WTC11 (cell line): ENCODE measurements at regions of chr19 and their contacts with region 1.

Region 1: DNA sequence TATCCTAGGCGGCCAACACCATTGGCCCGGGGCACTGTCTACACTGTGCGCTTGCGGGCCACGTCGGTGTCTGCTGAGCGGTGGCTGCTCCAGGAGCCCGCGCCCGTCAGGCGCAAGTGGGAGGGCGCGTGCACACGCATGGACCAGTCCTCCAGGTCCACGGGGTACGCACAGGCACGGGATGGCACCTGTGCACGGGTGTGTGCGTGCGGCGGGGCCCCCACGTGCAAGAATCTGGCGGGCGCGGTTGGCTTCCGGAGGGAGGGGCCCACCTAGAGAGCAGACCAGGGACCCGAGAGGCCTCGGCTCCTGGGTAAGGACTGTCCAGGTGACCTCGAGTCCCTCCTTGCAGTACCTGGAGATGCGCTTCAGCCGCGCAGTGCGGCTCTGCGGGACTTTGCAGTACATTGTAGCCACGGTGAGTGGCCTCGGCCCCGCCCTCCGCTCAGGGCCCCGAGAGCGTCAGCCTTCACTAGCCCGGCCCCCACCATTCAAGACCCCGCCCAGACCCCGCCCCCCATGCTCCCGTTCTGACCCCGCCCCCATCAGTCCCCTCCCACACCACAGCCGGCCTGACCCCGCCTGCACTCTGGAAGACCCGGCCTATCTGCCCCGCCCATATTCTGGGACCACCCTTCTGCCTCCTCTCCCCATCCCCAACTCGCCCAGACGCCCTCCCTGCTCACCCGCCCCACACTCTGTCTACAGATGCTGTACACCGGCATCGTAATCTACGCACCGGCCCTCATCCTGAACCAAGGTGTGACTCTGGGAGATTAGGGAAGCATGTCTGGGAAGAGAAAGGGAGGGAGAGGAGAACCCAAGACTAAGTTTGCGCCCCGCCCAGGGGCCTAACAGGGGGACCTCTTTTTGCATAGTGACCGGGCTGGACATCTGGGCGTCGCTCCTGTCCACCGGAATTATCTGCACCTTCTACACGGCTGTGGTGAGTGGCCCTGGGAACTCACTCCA is 2.3 kb downstream of the SLC5A5 start:
- DNase-seq: peak; percentile 88
- ATAC-seq: peak; percentile 76
- H3K4me3 Mint-ChIP-seq: peak overlapping the region; percentile 68
- H3K27ac Mint-ChIP-seq: no peak overlapping the region
- H3K4me1 Mint-ChIP-seq: peaks cover 12% of the 10 kb centered on the region
- H3K27me3 Mint-ChIP-seq: peaks cover 13% of the 10 kb centered on the region
- CTCF ChIP-seq: no peak

Region 2: GRCh38 chr19:17737690-17738153 is 136.3 kb before region 1 on chr19:
- CTCF ChIA-PET with region 1: no interaction called
- POLR2A ChIA-PET with region 1: no interaction called
- DNase-seq: no peak
- ATAC-seq: no peak
- H3K4me3 Mint-ChIP-seq: no peak overlapping the region
- H3K27ac Mint-ChIP-seq: peak overlapping the region; percentile 49
- H3K4me1 Mint-ChIP-seq: peaks cover 5% of the 10 kb centered on the region; the same call in 1 of the 2 replicates
- H3K27me3 Mint-ChIP-seq: peaks cover 4% of the 10 kb centered on the region; the same call in 1 of the 2 replicates
- CTCF ChIP-seq: no peak

Region 3: DNA sequence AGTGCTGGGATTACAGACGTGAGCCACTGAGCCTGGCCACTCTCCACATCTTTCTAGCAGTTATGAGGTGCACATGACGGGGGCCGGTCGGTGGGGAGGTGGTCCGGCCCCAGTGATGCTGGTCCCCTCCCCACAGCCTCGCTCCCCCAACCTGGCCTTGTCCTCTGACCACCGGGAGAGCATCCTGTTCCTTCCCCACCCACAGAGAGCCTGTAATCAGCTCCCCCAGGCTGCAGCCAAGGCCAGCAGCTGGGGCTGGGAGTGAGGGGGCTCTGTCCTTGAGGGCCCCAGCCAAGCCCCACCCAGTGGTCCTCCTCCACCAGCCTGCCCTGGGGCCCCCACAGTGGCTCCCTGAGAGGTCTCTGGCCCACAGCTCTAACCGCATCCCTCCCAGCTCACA is 49.7 kb before region 1 on chr19:
- CTCF ChIA-PET with region 1: no interaction called
- POLR2A ChIA-PET with region 1: no interaction called
- DNase-seq: no peak
- ATAC-seq: no peak
- H3K4me3 Mint-ChIP-seq: no peak overlapping the region
- H3K27ac Mint-ChIP-seq: no peak overlapping the region
- H3K4me1 Mint-ChIP-seq: peaks cover 8% of the 10 kb centered on the region; the same call in 1 of the 2 replicates
- H3K27me3 Mint-ChIP-seq: no peaks in the 10 kb centered on the region; the same call in 1 of the 2 replicates
- CTCF ChIP-seq: no peak

Region 4: GRCh38 chr19:17915951-17916593 is 42.0 kb after region 1 on chr19:
- CTCF ChIA-PET with region 1: no interaction called
- POLR2A ChIA-PET with region 1: no interaction called
- DNase-seq: no peak
- ATAC-seq: no peak
- H3K4me3 Mint-ChIP-seq: no peak overlapping the region
- H3K27ac Mint-ChIP-seq: no peak overlapping the region
- H3K4me1 Mint-ChIP-seq: no peaks in the 10 kb centered on the region
- H3K27me3 Mint-ChIP-seq: peaks cover 20% of the 10 kb centered on the region
- CTCF ChIP-seq: no peak

Region 5: DNA sequence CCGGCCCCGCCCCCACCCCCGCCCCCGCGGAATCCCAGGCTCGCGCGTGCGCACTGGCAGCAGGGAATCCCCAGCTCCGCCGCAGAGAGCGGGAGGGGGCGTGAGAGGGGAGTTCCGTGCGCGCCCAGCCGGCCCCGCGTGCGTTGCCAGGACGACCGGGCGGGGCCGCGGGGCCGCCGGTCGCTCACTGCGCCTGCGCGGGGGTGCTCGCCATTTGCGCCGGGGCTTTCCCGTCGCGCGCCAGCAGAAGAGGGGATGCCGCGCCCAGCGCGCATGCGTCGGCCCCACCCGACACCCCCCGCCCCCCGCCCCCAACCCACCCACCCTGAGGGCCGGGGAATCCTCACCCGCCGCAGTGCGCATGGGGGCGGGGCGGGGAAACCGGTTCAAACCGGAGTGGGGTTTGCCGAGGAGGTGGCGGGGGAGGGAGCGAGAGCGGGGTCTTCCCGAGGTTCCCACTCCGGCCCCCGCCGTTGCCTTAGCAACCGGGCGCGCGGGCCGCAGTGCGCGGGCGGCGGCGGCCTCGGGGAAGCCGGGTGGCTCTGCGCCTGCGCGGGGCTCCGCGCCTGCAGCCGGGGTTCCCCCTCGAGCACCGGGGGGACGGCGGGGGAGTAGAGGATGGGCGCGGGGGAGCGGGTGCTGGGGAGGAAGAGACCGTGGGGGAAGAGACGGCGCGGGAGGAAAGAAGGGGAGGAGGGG is 73.9 kb after region 1 on chr19:
- CTCF ChIA-PET with region 1: interaction called, 22 read pairs
- POLR2A ChIA-PET with region 1: interaction called, 6 read pairs
- DNase-seq: peak; percentile 97
- ATAC-seq: peak; percentile 27
- H3K4me3 Mint-ChIP-seq: peak overlapping the region; percentile 77
- H3K27ac Mint-ChIP-seq: no peak overlapping the region
- H3K4me1 Mint-ChIP-seq: peaks cover 28% of the 10 kb centered on the region
- H3K27me3 Mint-ChIP-seq: peaks cover 41% of the 10 kb centered on the region
- CTCF ChIP-seq: no peak